Gastrocnemius medialis (tissue), 4 donors: ENCODE measurements at regions of chr12 and their contacts with region 1.

Region 1: GRCh38 chr12:112243255-112244110 is 118.1 kb downstream of the TRAFD1 start:
- DNase-seq: no peak
- ATAC-seq: no peak
- H3K4me3 ChIP-seq: no peak overlapping the region
- H3K27ac ChIP-seq: no peak overlapping the region
- H3K4me1 ChIP-seq: no peaks in the 10 kb centered on the region
- H3K27me3 ChIP-seq: no peaks in the 10 kb centered on the region
- CTCF ChIP-seq: no peak
- POLR2A ChIP-seq: no peak

Region 2: DNA sequence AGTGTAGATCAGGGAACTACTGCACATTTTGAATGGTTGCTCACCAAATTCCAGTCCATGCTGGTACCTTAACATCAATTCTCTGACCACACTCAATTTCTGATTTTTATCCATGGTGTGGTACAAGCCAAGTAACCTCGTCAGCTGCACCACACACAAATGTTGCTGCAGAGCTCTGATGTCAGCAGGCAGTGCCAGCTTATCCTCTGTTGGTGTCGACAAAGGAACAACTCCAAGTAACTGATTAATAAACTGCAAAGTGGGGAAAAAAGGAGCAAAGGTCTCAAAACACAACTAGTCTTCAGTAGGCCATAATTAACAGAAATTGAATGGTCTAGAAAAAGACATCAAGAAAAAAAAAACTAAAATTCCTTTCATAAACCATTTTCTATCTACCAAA is 182.3 kb before region 1 on chr12:
- in situ Hi-C with region 1: loop called in 1 of 4 experiments (anchors 25 kb)
- intact Hi-C with region 1: no loop called
- DNase-seq: no peak
- ATAC-seq: no peak
- H3K4me3 ChIP-seq: no peak overlapping the region
- H3K27ac ChIP-seq: no peak overlapping the region
- H3K4me1 ChIP-seq: no peaks in the 10 kb centered on the region
- H3K27me3 ChIP-seq: no peaks in the 10 kb centered on the region
- CTCF ChIP-seq: no peak
- POLR2A ChIP-seq: no peak